CD8-positive, alpha-beta T cell (primary cell): ENCODE measurements at regions of chr1 and their contacts with region 1.

Region 1: DNA sequence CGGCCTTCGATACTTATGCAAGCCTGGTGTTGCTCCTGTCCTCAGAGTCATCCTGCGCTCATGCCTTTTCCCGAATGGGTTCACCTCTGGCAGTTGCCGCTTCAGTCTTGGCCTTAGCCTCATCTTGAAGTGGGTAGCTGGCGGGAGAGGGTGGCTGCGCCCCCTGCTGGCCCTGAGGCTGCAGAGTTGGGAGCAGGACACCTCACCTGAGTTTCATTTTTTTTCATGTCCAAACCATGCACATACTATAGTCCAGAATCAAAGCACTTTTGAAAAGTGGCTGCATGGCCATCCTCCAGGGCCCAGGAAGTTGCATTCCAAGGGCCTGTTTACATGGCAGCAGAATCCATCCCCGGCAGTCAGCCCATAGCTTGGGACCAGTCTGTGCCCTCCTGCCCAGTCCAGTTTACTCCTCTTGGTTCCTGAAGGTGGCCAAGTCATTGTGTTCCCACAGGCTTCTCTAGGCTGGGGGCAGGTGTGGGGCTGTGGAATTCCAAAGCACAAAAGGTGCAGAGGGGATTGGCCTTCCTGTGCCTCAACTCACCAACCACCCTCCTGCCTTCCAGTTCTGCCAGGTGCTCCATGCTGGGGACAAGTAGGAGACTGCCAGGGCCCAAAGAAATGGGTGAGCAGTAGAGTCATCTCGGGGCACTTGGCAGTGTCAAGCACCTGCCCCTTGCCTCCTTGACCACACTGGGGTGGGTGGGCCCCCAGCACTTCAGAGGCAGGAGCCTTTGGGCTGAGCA is 44.0 kb downstream of the YARS1 start:
- DNase-seq: peak; percentile 50 to 83 (median 75)
- ATAC-seq: peak; percentile 86
- H3K4me3 ChIP-seq: no peak overlapping the region
- H3K4me3 Mint-ChIP-seq: no peak overlapping the region
- H3K27ac ChIP-seq: no peak overlapping the region
- H3K27ac Mint-ChIP-seq: peak overlapping the region; percentile 53
- H3K4me1 ChIP-seq: no peaks in the 10 kb centered on the region
- H3K4me1 Mint-ChIP-seq: peaks cover 4% of the 10 kb centered on the region
- H3K27me3 ChIP-seq: no peaks in the 10 kb centered on the region
- H3K27me3 Mint-ChIP-seq: no peaks in the 10 kb centered on the region
- CTCF ChIP-seq: peak; percentile 92

Region 2: GRCh38 chr1:32521165-32521564 is 252.0 kb before region 1 on chr1:
- CTCF ChIA-PET with region 1: interaction called, 14 read pairs
- POLR2A ChIA-PET with region 1: no interaction called
- intact Hi-C with region 1: loop called in 1 of 2 experiments (anchors 1 kb)
- DNase-seq: no peak
- ATAC-seq: no peak
- H3K4me3 ChIP-seq: no peak overlapping the region
- H3K4me3 Mint-ChIP-seq: peak overlapping the region; percentile 78
- H3K27ac ChIP-seq: no peak overlapping the region
- H3K27ac Mint-ChIP-seq: no peak overlapping the region
- H3K4me1 ChIP-seq: no peaks in the 10 kb centered on the region
- H3K4me1 Mint-ChIP-seq: peaks cover 7% of the 10 kb centered on the region
- H3K27me3 ChIP-seq: peaks cover 0 to 3% of the 10 kb centered on the region in 2 experiments
- H3K27me3 Mint-ChIP-seq: peaks cover 7% of the 10 kb centered on the region
- CTCF ChIP-seq: no peak

Region 3: DNA sequence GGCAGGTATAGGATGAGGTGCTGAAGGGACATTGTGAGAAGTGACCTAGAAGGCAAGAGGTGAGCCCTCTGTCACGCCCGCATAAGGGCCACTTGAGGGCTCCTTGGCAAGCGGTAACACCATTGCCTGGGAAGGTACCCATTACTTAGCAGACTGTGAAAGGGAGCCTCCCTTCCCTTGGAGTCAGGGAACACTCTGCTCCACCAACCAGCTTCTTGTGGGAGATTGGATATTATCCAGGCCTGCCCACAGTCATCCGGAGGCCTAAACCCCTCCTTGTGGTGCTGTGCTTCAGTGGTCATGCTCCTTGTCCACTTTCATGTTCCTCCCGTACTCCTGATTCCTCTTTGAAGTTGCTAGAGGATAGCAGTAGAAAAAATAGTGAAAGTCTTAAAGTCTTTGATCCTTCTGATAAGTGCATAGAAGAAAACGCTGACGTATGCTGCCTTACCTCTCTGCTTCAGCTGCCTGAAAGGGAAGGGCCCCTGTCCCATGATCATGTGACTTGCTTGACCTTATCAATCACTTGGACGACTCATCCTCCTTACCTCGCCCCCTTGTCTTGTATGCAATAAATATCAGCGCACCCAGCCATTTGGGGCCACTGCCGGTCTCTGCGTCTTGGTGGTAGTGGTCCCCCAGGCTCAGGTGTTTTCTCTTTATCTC is 106.2 kb before region 1 on chr1:
- CTCF ChIA-PET with region 1: no interaction called
- POLR2A ChIA-PET with region 1: no interaction called
- intact Hi-C with region 1: no loop called
- DNase-seq: no peak
- ATAC-seq: no peak
- H3K4me3 ChIP-seq: no peak overlapping the region
- H3K4me3 Mint-ChIP-seq: no peak overlapping the region
- H3K27ac ChIP-seq: no peak overlapping the region
- H3K27ac Mint-ChIP-seq: no peak overlapping the region
- H3K4me1 ChIP-seq: no peaks in the 10 kb centered on the region
- H3K4me1 Mint-ChIP-seq: peaks cover 7% of the 10 kb centered on the region
- H3K27me3 ChIP-seq: no peaks in the 10 kb centered on the region
- H3K27me3 Mint-ChIP-seq: no peaks in the 10 kb centered on the region
- CTCF ChIP-seq: no peak

Region 4: GRCh38 chr1:32716312-32717148 is 56.7 kb before region 1 on chr1:
- CTCF ChIA-PET with region 1: interaction called, 130 read pairs
- POLR2A ChIA-PET with region 1: interaction called, 5 read pairs
- intact Hi-C with region 1: loop called (anchors 1 kb)
- DNase-seq: peak in 5 of 9 experiments; percentile 3 to 58 (median 43)
- ATAC-seq: no peak
- H3K4me3 ChIP-seq: no peak overlapping the region
- H3K4me3 Mint-ChIP-seq: no peak overlapping the region
- H3K27ac ChIP-seq: no peak overlapping the region
- H3K27ac Mint-ChIP-seq: no peak overlapping the region
- H3K4me1 ChIP-seq: no peaks in the 10 kb centered on the region
- H3K4me1 Mint-ChIP-seq: peaks cover 11% of the 10 kb centered on the region
- H3K27me3 ChIP-seq: no peaks in the 10 kb centered on the region
- H3K27me3 Mint-ChIP-seq: peaks cover 7% of the 10 kb centered on the region
- CTCF ChIP-seq: no peak

Region 5: GRCh38 chr1:32729254-32730046 is 43.7 kb before region 1 on chr1:
- CTCF ChIA-PET with region 1: interaction called, 11 read pairs
- POLR2A ChIA-PET with region 1: no interaction called
- intact Hi-C with region 1: no loop called
- DNase-seq: no peak
- ATAC-seq: no peak
- H3K4me3 ChIP-seq: no peak overlapping the region
- H3K4me3 Mint-ChIP-seq: no peak overlapping the region
- H3K27ac ChIP-seq: no peak overlapping the region
- H3K27ac Mint-ChIP-seq: no peak overlapping the region
- H3K4me1 ChIP-seq: peaks cover 3% of the 10 kb centered on the region
- H3K4me1 Mint-ChIP-seq: peaks cover 12% of the 10 kb centered on the region
- H3K27me3 ChIP-seq: no peaks in the 10 kb centered on the region
- H3K27me3 Mint-ChIP-seq: peaks cover 11% of the 10 kb centered on the region
- CTCF ChIP-seq: no peak

Region 6: DNA sequence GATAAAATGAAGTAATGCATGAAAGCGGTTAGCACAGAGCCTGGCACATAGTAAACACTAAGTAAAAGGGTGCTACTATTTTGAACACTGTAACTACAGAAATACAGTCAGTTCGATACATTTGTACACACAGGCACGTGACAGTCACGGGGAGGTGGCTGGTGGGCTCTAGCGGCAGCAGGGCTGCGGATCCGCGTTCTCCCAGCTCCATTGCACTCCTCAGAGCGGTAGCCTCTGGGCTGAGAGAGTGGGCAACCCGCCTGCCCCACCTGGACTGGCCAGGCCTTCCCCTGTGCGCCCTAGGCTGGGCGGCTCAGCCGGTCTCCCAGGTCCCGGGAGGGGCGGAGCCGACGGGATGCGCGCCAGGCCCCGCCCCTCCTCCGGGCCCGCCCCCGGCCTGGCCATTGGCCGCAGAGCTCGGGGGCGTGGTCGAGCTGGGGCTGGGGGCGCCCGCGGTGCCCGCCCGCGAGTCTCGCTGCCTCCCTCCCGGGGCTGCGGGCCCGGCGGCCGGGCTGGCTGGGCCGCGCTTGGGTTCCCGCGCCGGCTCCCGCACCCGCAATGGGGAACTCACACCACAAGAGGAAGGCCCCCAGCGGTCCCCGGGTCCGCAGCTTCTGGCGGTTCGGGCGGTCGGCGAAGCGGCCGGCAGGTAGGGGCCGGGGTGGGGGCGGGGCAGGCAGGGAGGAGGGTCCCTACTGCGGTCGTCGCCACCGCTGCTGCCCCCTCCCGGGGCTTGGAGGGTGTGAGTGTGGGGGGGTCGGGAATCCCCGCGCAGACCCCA is 19.5 kb before region 1 on chr1:
- CTCF ChIA-PET with region 1: interaction called, 10 read pairs
- POLR2A ChIA-PET with region 1: interaction called, 3 read pairs
- intact Hi-C with region 1: no loop called
- DNase-seq: peak; percentile 41 to 87 (median 68)
- ATAC-seq: peak; percentile 77
- H3K4me3 ChIP-seq: peak overlapping the region; percentile 48 to 76
- H3K4me3 Mint-ChIP-seq: peak overlapping the region; percentile 87
- H3K27ac ChIP-seq: no peak overlapping the region
- H3K27ac Mint-ChIP-seq: peak overlapping the region; percentile 4
- H3K4me1 ChIP-seq: peaks cover 6% of the 10 kb centered on the region
- H3K4me1 Mint-ChIP-seq: peaks cover 11% of the 10 kb centered on the region
- H3K27me3 ChIP-seq: no peaks in the 10 kb centered on the region
- H3K27me3 Mint-ChIP-seq: peaks cover 2% of the 10 kb centered on the region
- CTCF ChIP-seq: no peak

Region 7: DNA sequence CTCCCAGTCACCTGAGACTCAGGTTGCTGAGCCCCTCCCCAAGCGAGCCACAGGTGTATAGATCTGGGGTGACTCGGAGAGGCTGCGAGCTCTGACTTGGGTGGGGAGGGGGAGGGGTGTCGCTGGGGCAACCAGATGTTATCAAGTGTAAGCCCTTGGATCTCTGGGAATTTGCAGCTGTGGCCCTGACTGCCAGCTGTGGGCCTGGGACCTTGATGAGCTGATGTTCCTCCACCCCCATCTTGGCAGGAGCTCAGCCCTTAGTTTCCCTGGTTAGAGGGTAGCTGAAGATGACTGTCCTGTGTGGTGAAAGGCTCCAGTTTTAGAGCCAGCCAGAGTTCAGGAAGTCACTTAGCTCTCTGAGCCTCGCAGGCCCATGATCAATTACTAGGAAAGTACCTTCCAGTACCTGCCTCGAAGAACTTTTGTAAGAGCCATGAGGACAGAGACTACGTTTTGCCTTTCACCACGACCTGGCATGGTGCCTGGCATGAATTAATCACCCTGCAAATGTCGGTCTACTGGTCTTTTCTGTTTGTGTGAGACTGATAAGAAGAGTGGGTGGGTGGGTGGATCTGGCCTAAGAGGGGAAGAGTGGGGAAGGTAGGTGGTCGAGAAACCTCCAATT is 11.8 kb before region 1 on chr1:
- CTCF ChIA-PET with region 1: interaction called, 14 read pairs
- POLR2A ChIA-PET with region 1: no interaction called
- intact Hi-C with region 1: no loop called
- DNase-seq: no peak
- ATAC-seq: no peak
- H3K4me3 ChIP-seq: no peak overlapping the region
- H3K4me3 Mint-ChIP-seq: no peak overlapping the region
- H3K27ac ChIP-seq: no peak overlapping the region
- H3K27ac Mint-ChIP-seq: no peak overlapping the region
- H3K4me1 ChIP-seq: peaks cover 11% of the 10 kb centered on the region
- H3K4me1 Mint-ChIP-seq: peaks cover 10% of the 10 kb centered on the region
- H3K27me3 ChIP-seq: no peaks in the 10 kb centered on the region
- H3K27me3 Mint-ChIP-seq: no peaks in the 10 kb centered on the region
- CTCF ChIP-seq: no peak

Region 8: GRCh38 chr1:32876341-32877210 is 103.4 kb after region 1 on chr1:
- CTCF ChIA-PET with region 1: interaction called, 12 read pairs
- POLR2A ChIA-PET with region 1: no interaction called
- intact Hi-C with region 1: loop called (anchors 1 to 2 kb)
- DNase-seq: peak in 6 of 9 experiments; percentile 25 to 74 (median 68)
- ATAC-seq: peak; percentile 81
- H3K4me3 ChIP-seq: no peak overlapping the region
- H3K4me3 Mint-ChIP-seq: no peak overlapping the region
- H3K27ac ChIP-seq: no peak overlapping the region
- H3K27ac Mint-ChIP-seq: no peak overlapping the region
- H3K4me1 ChIP-seq: no peaks in the 10 kb centered on the region
- H3K4me1 Mint-ChIP-seq: peaks cover 9% of the 10 kb centered on the region
- H3K27me3 ChIP-seq: peaks cover 5 to 21% of the 10 kb centered on the region in 2 experiments
- H3K27me3 Mint-ChIP-seq: peaks cover 47% of the 10 kb centered on the region
- CTCF ChIP-seq: peak; percentile 61